ENCODE measurements at regions of chr5 and their contacts with region 1.

Region 1: GRCh38 chr5:140926443-140927227 is 536 bp downstream of the PCDHAC1 start:
- H3K4me3 ChIP-seq: peak overlapping the region; percentile 52
- H3K27ac ChIP-seq: no peak overlapping the region
- H3K4me1 ChIP-seq: no peaks in the 10 kb centered on the region
- CTCF ChIP-seq: peak; percentile 75; the same call in 1 of the 2 replicates

Region 2: GRCh38 chr5:140946578-140946977 is 19.9 kb after region 1 on chr5:
- CTCF ChIA-PET with region 1: interaction called, 13 read pairs
- POLR2A ChIA-PET with region 1: no interaction called
- H3K4me3 ChIP-seq: no peak overlapping the region
- H3K27ac ChIP-seq: no peak overlapping the region
- H3K4me1 ChIP-seq: no peaks in the 10 kb centered on the region
- CTCF ChIP-seq: no peak